ENCODE measurements at regions of chr11 and their contacts with region 1.

Region 1: DNA sequence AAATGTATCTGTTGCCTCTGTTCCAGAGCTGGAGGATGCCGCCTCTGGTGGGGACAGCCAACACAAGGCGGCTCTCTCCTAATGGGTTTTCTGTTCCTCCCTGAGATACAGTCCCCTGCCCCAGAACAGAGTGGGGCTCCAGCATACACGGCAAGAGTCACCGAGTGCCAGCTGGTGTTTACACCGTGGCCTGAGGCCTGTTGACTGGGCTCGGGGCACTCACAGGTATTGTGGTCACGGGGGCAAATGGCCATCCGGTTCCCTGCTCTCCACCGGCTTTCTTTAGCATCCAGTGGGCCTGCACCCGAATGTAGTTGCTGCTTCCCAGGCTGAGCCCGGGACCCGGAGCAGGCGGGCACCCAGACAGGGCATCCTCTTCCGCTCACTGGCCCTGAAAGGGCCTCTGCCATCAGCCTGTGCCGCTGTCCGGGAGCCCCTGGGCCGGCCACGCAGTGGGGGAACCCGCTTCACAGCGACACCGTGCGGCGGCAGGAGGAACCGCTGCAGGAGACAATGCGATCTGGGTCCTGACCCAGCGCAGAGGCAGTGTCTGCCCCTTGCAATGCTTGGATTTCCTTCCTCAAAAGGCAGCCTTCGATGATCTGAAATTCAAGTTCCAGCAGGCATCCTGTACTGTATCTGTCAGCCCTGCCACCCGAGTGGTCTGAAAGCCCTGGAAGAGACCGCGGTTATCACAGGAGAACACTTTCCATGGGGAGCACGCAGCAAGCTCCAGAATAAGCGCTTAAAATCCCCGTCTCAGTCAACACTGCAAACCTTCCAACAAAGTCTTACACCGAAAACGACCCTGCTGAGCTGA is 859 bp upstream of the KRTAP5-5 start:
- DNase-seq: peak; percentile 63
- ATAC-seq: peak; percentile 80
- H3K4me3 ChIP-seq: no peak overlapping the region
- H3K4me3 Mint-ChIP-seq: no peak overlapping the region
- H3K27ac ChIP-seq: no peak overlapping the region
- H3K27ac Mint-ChIP-seq: no peak overlapping the region
- H3K4me1 ChIP-seq: peaks cover 7 to 8% of the 10 kb centered on the region in 2 donors
- H3K4me1 Mint-ChIP-seq: peaks cover 3% of the 10 kb centered on the region
- H3K27me3 ChIP-seq: peaks cover 0 to 24% (median 6%) of the 10 kb centered on the region in 4 experiments
- H3K27me3 Mint-ChIP-seq: peaks cover 50% of the 10 kb centered on the region
- CTCF ChIP-seq: peak; percentile 87

Region 2: DNA sequence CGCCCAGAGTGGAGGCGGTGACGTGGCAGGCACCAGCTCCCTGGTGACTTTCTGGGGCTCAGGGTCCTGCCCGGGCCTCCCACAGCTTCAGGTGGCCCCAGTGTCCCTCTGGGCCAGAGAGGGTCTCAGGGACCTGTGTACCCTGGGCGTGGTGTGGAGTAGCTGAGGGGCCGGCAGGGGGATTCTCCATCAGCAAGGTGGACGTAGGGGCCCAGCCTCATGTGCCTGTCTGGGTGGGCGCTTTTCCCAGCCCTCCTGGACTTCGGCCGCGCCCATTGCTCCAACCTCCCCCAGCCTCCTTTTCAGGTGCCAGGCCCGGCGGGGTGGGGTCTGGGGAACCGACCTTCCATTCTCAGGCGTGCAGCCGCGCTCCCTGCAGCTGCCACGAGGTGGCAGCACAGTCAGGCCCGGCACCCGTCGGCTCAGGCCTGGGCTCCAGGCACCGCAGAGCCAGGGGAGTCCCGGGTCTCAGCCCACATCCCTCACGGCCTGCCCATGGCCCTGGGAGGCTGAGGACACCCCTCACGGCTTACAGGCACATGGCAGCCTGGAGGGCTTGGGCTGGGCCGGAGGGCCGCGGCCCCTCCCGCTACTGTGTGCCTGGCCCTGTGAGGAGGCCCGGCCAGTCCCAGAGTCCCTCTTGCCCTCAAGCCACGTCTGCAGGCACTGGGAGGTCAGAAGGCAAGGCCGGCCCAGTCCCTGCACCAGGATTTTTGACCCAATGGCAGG is 425.8 kb before region 1 on chr11:
- CTCF ChIA-PET with region 1: no interaction called
- POLR2A ChIA-PET with region 1: no interaction called
- intact Hi-C with region 1: loop called (anchors 2 kb)
- DNase-seq: peak; percentile 77
- ATAC-seq: peak; percentile 90
- H3K4me3 ChIP-seq: no peak overlapping the region
- H3K4me3 Mint-ChIP-seq: no peak overlapping the region
- H3K27ac ChIP-seq: no peak overlapping the region
- H3K27ac Mint-ChIP-seq: no peak overlapping the region
- H3K4me1 ChIP-seq: peaks cover 0 to 6% of the 10 kb centered on the region in 2 donors
- H3K4me1 Mint-ChIP-seq: no peaks in the 10 kb centered on the region
- H3K27me3 ChIP-seq: peaks cover 0 to 13% (median 0%) of the 10 kb centered on the region in 4 experiments
- H3K27me3 Mint-ChIP-seq: no peaks in the 10 kb centered on the region
- CTCF ChIP-seq: peak; percentile 86

Region 3: GRCh38 chr11:1546536-1547400 is 81.9 kb before region 1 on chr11:
- CTCF ChIA-PET with region 1: interaction called, 25 read pairs
- POLR2A ChIA-PET with region 1: no interaction called
- intact Hi-C with region 1: no loop called
- DNase-seq: peak; percentile 74
- ATAC-seq: peak; percentile 63
- H3K4me3 ChIP-seq: peak overlapping the region in 3 of 5 experiments; percentile 36 to 59 (median 47)
- H3K4me3 Mint-ChIP-seq: peak overlapping the region; percentile 59
- H3K27ac ChIP-seq: no peak overlapping the region
- H3K27ac Mint-ChIP-seq: no peak overlapping the region
- H3K4me1 ChIP-seq: peaks cover 23 to 27% of the 10 kb centered on the region in 2 donors
- H3K4me1 Mint-ChIP-seq: peaks cover 16% of the 10 kb centered on the region
- H3K27me3 ChIP-seq: peaks cover 0 to 58% (median 17%) of the 10 kb centered on the region in 4 experiments
- H3K27me3 Mint-ChIP-seq: peaks cover 12% of the 10 kb centered on the region
- CTCF ChIP-seq: peak; percentile 77

Region 4: GRCh38 chr11:1598816-1599215 is 29.9 kb before region 1 on chr11:
- CTCF ChIA-PET with region 1: interaction called, 6 read pairs
- POLR2A ChIA-PET with region 1: no interaction called
- intact Hi-C with region 1: loop called (anchors 2 kb)
- DNase-seq: no peak
- ATAC-seq: no peak
- H3K4me3 ChIP-seq: no peak overlapping the region
- H3K4me3 Mint-ChIP-seq: no peak overlapping the region
- H3K27ac ChIP-seq: no peak overlapping the region
- H3K27ac Mint-ChIP-seq: no peak overlapping the region
- H3K4me1 ChIP-seq: no peaks in the 10 kb centered on the region
- H3K4me1 Mint-ChIP-seq: peaks cover 12% of the 10 kb centered on the region
- H3K27me3 ChIP-seq: peaks cover 0 to 19% (median 4%) of the 10 kb centered on the region in 4 experiments
- H3K27me3 Mint-ChIP-seq: peaks cover 52% of the 10 kb centered on the region
- CTCF ChIP-seq: no peak

Region 5: GRCh38 chr11:1640076-1640946 is 11.6 kb after region 1 on chr11:
- CTCF ChIA-PET with region 1: interaction called, 13 read pairs
- POLR2A ChIA-PET with region 1: no interaction called
- intact Hi-C with region 1: no loop called
- DNase-seq: peak; percentile 47
- ATAC-seq: no peak
- H3K4me3 ChIP-seq: no peak overlapping the region
- H3K4me3 Mint-ChIP-seq: no peak overlapping the region
- H3K27ac ChIP-seq: no peak overlapping the region
- H3K27ac Mint-ChIP-seq: no peak overlapping the region
- H3K4me1 ChIP-seq: no peaks in the 10 kb centered on the region
- H3K4me1 Mint-ChIP-seq: no peaks in the 10 kb centered on the region
- H3K27me3 ChIP-seq: peaks cover 0 to 21% (median 2%) of the 10 kb centered on the region in 4 experiments
- H3K27me3 Mint-ChIP-seq: peaks cover 26% of the 10 kb centered on the region
- CTCF ChIP-seq: peak; percentile 81

Measured in B cell (primary cell).